ENCODE measurements at regions of chr13 and their contacts with region 1.

Region 1: DNA sequence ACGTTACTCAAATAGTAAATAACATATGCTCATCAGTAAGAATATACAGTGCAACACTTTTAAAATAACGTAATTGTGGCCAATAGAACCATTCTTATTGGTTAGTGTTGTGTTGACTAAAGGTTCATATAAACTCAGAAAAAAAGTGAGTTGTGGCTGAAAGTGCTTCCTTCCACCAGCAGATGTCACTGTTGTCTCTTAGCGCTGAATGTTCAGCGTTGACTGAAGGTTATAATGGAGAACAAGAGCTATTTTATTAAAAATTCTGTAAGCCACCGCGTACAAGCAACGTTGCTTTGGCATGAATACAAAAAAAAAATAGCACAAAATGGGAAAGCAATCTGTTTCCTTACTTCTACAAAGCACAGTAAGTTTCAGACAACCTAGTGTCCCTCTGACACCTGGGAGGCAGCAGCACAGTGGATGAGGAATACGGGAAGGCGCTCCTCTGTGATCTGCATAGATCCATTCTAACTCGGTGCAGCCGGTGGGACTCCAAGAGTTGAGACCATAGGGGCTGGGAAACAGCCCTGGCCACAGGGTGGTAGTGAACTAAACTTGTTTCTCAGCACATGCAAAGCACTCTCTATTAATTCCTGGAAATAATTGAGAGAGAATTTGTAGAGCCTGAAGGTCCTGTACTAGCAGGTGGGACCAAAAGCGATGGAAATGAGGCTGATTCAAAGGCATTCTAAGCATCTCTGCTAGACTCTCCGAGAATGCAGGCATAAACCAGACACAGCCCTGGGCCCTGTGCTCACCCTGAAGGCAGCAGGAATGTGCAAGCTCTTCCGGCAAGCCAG is 24.0 kb upstream of the OXGR1 start:
- DNase-seq: peak; percentile 41
- H3K4me3 ChIP-seq: no peak overlapping the region; a peak in 1 of 4 replicates
- H3K27ac ChIP-seq: no peak overlapping the region
- H3K4me1 ChIP-seq: peaks cover 0 to 2% of the 10 kb centered on the region in 2 experiments; a peak in 1 of 4 replicates
- H3K27me3 ChIP-seq: no peaks in the 10 kb centered on the region; the same call in 1 of the 2 replicates
- CTCF ChIP-seq: peak; percentile 93
- EP300 ChIP-seq: no peak
- RAD21 ChIP-seq: peak; percentile 74

Region 2: DNA sequence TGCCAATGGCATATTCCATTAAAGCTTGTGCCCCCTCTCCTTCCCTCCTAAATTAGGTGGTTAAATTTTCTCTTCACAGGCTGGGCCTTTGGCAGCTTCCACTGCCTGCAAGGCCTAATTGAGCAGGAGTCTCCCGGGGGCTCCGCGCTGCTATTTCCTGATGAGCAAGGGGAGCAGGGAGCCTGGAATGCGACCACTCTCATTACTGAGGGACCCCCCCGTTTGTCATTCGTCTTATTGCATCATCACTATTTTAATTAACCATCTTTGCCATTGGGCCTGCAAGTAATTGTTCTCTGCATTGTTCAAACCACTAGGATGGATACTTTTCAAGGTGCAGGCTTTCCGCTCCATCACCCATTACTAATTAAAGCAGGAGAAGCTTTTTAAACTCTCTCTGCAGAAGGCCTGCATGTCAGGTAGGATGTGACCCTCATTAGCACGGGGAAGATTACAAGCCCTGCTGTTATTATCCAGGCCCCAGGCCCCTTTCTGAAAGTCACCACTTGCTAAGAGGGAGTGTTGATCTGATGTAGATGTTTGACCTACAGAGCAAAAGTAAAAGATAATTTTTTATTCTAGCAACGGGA is 166.3 kb before region 1 on chr13:
- CTCF ChIA-PET with region 1: no interaction called
- POLR2A ChIA-PET with region 1: no interaction called
- DNase-seq: no peak
- H3K4me3 ChIP-seq: no peak overlapping the region
- H3K27ac ChIP-seq: no peak overlapping the region
- H3K4me1 ChIP-seq: no peaks in the 10 kb centered on the region
- H3K27me3 ChIP-seq: no peaks in the 10 kb centered on the region
- CTCF ChIP-seq: no peak
- EP300 ChIP-seq: no peak
- RAD21 ChIP-seq: no peak

Region 3: GRCh38 chr13:97004096-97004876 is 13.9 kb before region 1 on chr13:
- CTCF ChIA-PET with region 1: interaction called, 37 read pairs
- POLR2A ChIA-PET with region 1: no interaction called
- DNase-seq: no peak
- H3K4me3 ChIP-seq: no peak overlapping the region
- H3K27ac ChIP-seq: no peak overlapping the region
- H3K4me1 ChIP-seq: peaks cover 0 to 16% of the 10 kb centered on the region in 2 experiments; a peak in 2 of 4 replicates
- H3K27me3 ChIP-seq: no peaks in the 10 kb centered on the region
- CTCF ChIP-seq: no peak
- EP300 ChIP-seq: no peak
- RAD21 ChIP-seq: no peak